IMR-90 (cell line): ENCODE measurements at regions of chr3 and their contacts with region 1.

Region 1: GRCh38 chr3:12648384-12648959 is 15.4 kb downstream of the RAF1 start:
- DNase-seq: no peak
- ATAC-seq: no peak
- H3K4me3 ChIP-seq: no peak overlapping the region
- H3K27ac ChIP-seq: no peak overlapping the region
- H3K4me1 ChIP-seq: peaks cover 12% of the 10 kb centered on the region
- H3K27me3 ChIP-seq: no peaks in the 10 kb centered on the region
- CTCF ChIP-seq: no peak
- POLR2A ChIP-seq: no peak
- RAD21 ChIP-seq: no peak

Region 2: DNA sequence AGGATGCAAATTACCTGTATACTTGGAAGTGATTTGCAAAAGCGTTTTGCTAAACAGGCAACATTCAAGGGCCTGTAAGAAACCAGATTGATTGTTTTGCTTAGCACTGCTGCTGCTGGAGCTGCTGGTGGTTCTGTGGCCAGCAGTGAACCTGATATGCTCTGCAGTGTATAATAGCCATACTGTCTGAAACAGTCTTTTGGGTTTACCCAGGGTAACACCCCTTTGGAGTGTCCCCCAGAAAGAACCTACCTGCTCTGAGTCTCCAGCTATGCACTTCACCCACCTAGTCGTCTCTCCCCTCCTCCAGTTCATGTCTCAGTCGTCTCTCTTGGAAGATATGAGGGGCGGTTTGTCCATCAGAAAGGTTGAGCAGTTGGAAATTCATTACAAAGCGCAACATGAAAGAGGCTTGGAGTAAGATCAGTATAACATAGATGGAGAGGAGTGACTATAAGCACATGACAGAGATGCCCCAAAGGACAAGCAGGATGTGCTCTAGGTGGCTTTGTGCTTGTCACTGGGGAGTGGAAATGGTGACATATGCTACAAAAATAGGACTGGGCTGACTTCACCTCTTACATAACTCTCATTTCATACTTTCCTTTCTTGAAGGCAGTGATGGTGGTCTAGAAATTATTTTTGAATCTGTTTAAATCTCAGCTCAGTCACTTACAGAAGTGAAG is 87.8 kb before region 1 on chr3:
- CTCF ChIA-PET with region 1: no interaction called
- POLR2A ChIA-PET with region 1: no interaction called
- dilution Hi-C with region 1: no loop called
- in situ Hi-C with region 1: no loop called
- intact Hi-C with region 1: no loop called
- DNase-seq: no peak
- ATAC-seq: no peak
- H3K4me3 ChIP-seq: no peak overlapping the region
- H3K27ac ChIP-seq: no peak overlapping the region
- H3K4me1 ChIP-seq: peaks cover 10% of the 10 kb centered on the region
- H3K27me3 ChIP-seq: no peaks in the 10 kb centered on the region
- CTCF ChIP-seq: no peak
- POLR2A ChIP-seq: no peak
- RAD21 ChIP-seq: no peak

Region 3: DNA sequence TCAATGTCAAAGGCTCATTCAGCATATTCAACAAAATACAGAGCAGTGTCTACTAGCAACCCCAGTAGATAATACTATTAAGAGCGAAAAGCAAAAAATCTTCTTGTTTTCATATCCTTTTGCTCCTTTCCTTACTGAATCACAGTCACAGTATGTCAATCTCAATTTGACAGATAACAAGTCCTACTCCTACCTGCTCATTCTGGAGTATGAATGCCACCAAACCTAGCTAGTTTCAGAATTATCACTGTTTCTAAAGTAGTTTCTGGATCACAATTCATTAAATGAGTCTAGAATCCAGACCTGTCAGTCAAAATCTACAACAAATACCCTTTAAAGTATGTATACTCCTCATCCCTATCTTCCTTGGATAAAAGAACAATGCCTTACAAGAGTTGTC is 40.1 kb before region 1 on chr3:
- CTCF ChIA-PET with region 1: no interaction called
- POLR2A ChIA-PET with region 1: no interaction called
- dilution Hi-C with region 1: no loop called
- in situ Hi-C with region 1: no loop called
- intact Hi-C with region 1: loop called (anchors 5 kb)
- DNase-seq: no peak
- ATAC-seq: no peak
- H3K4me3 ChIP-seq: no peak overlapping the region
- H3K27ac ChIP-seq: peak overlapping the region; percentile 73; the same call in 1 of the 2 replicates
- H3K4me1 ChIP-seq: peaks cover 10% of the 10 kb centered on the region
- H3K27me3 ChIP-seq: no peaks in the 10 kb centered on the region
- CTCF ChIP-seq: no peak
- POLR2A ChIP-seq: no peak
- RAD21 ChIP-seq: no peak

Region 4: DNA sequence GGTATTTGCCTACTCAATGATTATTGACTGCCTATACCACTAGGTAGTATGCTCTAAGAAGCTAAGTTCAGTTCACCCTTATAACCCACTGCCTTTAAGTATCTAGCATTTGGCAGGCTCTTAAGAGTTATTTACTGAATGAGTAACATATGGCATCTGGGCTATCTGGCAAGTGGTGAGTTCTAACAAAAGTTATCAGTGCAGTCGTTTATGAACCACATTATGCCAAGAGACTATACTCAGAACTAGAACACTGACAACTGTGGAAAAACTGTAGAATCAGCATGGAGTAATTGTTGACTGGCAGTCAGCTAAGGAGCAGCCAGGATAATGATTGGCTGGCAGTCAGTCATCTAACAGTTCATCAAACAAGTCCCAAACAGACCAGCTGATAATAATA is 10.4 kb before region 1 on chr3:
- CTCF ChIA-PET with region 1: interaction called, 11 read pairs
- POLR2A ChIA-PET with region 1: interaction called, 3 read pairs
- dilution Hi-C with region 1: no loop called
- in situ Hi-C with region 1: no loop called
- intact Hi-C with region 1: no loop called
- DNase-seq: peak; percentile 70
- ATAC-seq: peak; percentile 71
- H3K4me3 ChIP-seq: no peak overlapping the region
- H3K27ac ChIP-seq: no peak overlapping the region
- H3K4me1 ChIP-seq: peaks cover 6% of the 10 kb centered on the region
- H3K27me3 ChIP-seq: no peaks in the 10 kb centered on the region
- CTCF ChIP-seq: no peak
- POLR2A ChIP-seq: no peak
- RAD21 ChIP-seq: no peak

Region 5: DNA sequence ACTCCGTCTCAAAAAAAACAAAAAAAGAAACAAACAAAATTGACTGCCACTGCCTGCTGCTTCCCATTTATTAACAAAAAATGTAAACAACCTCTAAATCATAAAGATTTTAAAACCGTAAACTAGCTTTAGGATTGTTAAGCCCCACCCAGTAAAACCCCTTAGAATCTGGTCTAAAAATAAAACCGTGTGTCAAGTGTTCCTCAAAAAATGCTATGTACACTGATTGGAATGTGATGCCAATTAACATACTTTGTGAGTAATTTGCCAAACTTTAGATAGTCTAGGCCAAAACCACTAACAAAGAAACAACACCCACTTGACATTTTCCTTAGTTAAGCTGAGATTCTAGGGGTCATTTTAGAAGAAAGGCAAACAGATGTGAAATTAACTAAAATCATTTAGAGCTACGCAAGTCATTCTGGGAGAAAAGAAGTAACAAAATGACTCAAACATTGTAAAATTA is 10.2 kb after region 1 on chr3:
- CTCF ChIA-PET with region 1: no interaction called
- POLR2A ChIA-PET with region 1: interaction called, 3 read pairs
- dilution Hi-C with region 1: no loop called
- in situ Hi-C with region 1: no loop called
- intact Hi-C with region 1: loop called (anchors 2 kb)
- DNase-seq: peak; percentile 80
- ATAC-seq: peak; percentile 18
- H3K4me3 ChIP-seq: no peak overlapping the region
- H3K27ac ChIP-seq: peak overlapping the region; percentile 86; the same call in 1 of the 2 replicates
- H3K4me1 ChIP-seq: peaks cover 16% of the 10 kb centered on the region
- H3K27me3 ChIP-seq: no peaks in the 10 kb centered on the region
- CTCF ChIP-seq: no peak
- POLR2A ChIP-seq: no peak
- RAD21 ChIP-seq: no peak